A549 (cell line): ENCODE measurements at regions of chr10 and their contacts with region 1.

Region 1: GRCh38 chr10:74275755-74276290 is 124.8 kb downstream of the ADK start:
- DNase-seq: no peak
- ATAC-seq: no peak
- H3K4me3 ChIP-seq: no peak overlapping the region
- H3K27ac ChIP-seq: no peak overlapping the region
- H3K4me1 ChIP-seq: no peaks in the 10 kb centered on the region
- CTCF ChIP-seq: no peak
- EP300 ChIP-seq: no peak
- POLR2A ChIP-seq: no peak
- RAD21 ChIP-seq: no peak

Region 2: DNA sequence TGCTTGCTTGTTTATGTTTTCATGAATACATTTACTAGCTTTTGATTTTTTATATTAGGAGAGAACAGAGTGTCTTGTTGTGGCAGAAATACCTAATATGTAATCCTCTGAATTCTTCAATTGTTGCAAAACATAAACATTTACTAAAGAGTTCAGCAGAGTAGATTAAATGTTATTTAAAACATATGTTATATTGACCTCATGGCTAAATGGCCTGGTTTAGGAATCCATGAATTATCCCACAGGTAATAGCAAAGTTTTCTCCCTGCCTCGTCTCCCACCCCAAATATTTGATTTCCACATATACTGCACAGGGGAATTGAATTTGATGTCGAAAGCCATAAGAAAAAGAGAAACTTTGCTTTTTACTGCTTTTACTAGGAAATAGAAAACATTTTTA is 13.0 kb before region 1 on chr10:
- CTCF ChIA-PET with region 1: interaction called, 10 read pairs
- POLR2A ChIA-PET with region 1: no interaction called
- DNase-seq: no peak
- ATAC-seq: no peak
- H3K4me3 ChIP-seq: no peak overlapping the region
- H3K27ac ChIP-seq: no peak overlapping the region
- H3K4me1 ChIP-seq: no peaks in the 10 kb centered on the region
- CTCF ChIP-seq: no peak
- EP300 ChIP-seq: no peak
- POLR2A ChIP-seq: no peak
- RAD21 ChIP-seq: no peak